ENCODE measurements at regions of chr15 and their contacts with region 1.

Region 1: GRCh38 chr15:63497642-63498467 is 6.5 kb upstream of the USP3 start:
- DNase-seq: no peak
- ATAC-seq: peak; percentile 73
- H3K4me3 ChIP-seq: peak overlapping the region; percentile 4; the same call in 1 of the 2 replicates
- H3K27ac ChIP-seq: peak overlapping the region; percentile 80
- H3K4me1 ChIP-seq: peaks cover 69% of the 10 kb centered on the region
- H3K27me3 ChIP-seq: no peaks in the 10 kb centered on the region
- CTCF ChIP-seq: no peak
- EP300 ChIP-seq: no peak
- POLR2A ChIP-seq: no peak
- RAD21 ChIP-seq: no peak

Region 2: GRCh38 chr15:63473999-63474809 is 23.7 kb before region 1 on chr15:
- CTCF ChIA-PET with region 1: interaction called, 28 read pairs
- POLR2A ChIA-PET with region 1: interaction called, 110 read pairs
- RAD21 ChIA-PET with region 1: interaction called, 197 read pairs
- SMC1A ChIA-PET with region 1: interaction called, 151 read pairs
- in situ Hi-C with region 1: no loop called
- intact Hi-C with region 1: loop called (anchors 1 kb)
- DNase-seq: peak; percentile 97
- ATAC-seq: peak; percentile 80
- H3K4me3 ChIP-seq: peak overlapping the region; percentile 59
- H3K27ac ChIP-seq: peak overlapping the region; percentile 100
- H3K4me1 ChIP-seq: peaks cover 62% of the 10 kb centered on the region
- H3K27me3 ChIP-seq: no peaks in the 10 kb centered on the region
- CTCF ChIP-seq: no peak
- EP300 ChIP-seq: peak; percentile 52 to 74; a peak in 2 of 4 replicates
- POLR2A ChIP-seq: no peak; the same call in 1 of the 2 replicates
- RAD21 ChIP-seq: peak; percentile 40; the same call in 1 of the 2 replicates

Region 3: DNA sequence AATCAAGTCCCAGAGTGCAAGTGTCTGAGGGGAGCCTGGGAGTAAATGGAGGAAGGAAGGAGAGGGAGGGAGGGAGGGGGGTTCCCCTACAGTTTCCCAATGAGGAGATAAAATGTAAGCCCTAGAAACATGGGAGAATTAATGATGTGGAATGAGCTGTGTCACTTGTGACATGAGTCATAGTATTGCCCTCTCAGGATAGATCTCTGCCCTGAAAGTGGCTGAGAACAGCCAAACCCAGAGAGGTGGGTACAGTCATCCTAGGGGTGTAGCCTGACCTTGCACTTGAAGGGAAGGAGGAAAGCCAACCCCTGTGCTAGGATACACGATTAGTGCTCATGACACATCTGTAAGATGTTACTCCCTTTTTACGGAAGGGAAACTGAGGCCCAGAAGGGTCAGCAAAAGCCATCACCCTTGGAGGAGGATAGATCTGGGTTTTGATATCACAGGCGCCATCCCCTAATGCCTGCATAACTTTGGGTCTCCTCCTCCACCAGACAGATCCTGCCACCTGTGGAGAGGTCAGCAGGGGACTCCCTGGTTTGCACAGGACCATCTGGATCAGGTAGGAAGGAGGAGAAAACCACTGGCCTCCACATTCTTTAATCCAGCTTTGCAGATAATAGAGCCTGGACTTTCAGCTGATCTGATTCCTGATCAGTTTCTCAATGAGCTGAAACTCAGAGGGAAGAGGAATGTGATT is 16.6 kb before region 1 on chr15:
- CTCF ChIA-PET with region 1: interaction called, 47 read pairs
- POLR2A ChIA-PET with region 1: interaction called, 110 read pairs
- RAD21 ChIA-PET with region 1: interaction called, 197 read pairs
- SMC1A ChIA-PET with region 1: interaction called, 151 read pairs
- in situ Hi-C with region 1: no loop called
- intact Hi-C with region 1: no loop called
- DNase-seq: peak; percentile 83
- ATAC-seq: peak; percentile 60
- H3K4me3 ChIP-seq: no peak overlapping the region
- H3K27ac ChIP-seq: peak overlapping the region; percentile 77
- H3K4me1 ChIP-seq: peaks cover 88% of the 10 kb centered on the region
- H3K27me3 ChIP-seq: no peaks in the 10 kb centered on the region
- CTCF ChIP-seq: 0 out of 6 replicates have a peak, but pooled peaks of 1 of the 3 experiments have one; percentile 4
- EP300 ChIP-seq: 0 out of 4 replicates have a peak, but pooled peaks of 1 of the 2 experiments have one; percentile 23
- POLR2A ChIP-seq: no peak
- RAD21 ChIP-seq: no peak

Region 4: DNA sequence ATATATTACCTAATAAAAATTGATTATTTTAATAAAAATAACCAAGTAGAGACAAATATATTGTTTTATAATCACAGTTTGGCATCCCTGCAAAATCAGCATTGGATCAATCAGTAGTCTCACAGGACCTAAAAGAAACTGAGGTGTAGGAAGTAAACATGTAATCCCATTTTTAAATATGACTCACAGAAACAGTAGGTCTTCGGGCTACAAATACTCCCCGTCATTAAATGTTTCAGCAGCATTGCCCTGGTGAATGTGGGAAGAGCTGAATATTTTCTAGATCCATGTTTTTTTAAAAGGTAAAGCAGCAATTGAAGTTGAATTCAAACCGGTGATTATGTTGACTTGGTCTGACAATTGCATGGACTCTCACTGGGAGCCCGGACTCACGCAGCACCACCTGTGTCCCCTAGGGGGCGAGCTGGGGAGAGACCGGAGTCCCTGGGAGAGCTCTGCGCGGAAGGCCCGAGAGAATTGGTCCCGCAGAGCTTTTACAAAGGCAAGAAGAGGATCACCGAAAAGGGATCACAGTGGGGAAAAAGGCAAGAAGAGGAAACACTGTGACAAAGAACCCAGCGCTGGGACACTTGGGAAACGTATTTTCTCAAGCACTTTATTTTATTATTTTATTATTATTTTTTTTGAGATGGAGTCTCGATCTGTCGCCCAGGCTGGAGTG is 10.6 kb before region 1 on chr15:
- CTCF ChIA-PET with region 1: interaction called, 81 read pairs
- POLR2A ChIA-PET with region 1: interaction called, 110 read pairs
- RAD21 ChIA-PET with region 1: interaction called, 144 read pairs
- SMC1A ChIA-PET with region 1: interaction called, 151 read pairs
- in situ Hi-C with region 1: no loop called
- intact Hi-C with region 1: loop called (anchors 1 kb)
- DNase-seq: no peak
- ATAC-seq: peak; percentile 74
- H3K4me3 ChIP-seq: peak overlapping the region; percentile 42; the same call in 1 of the 2 replicates
- H3K27ac ChIP-seq: peak overlapping the region; percentile 89
- H3K4me1 ChIP-seq: peaks cover 57% of the 10 kb centered on the region
- H3K27me3 ChIP-seq: no peaks in the 10 kb centered on the region
- CTCF ChIP-seq: peak; percentile 84 to 98 (median 97)
- EP300 ChIP-seq: no peak
- POLR2A ChIP-seq: no peak
- RAD21 ChIP-seq: peak; percentile 82

Region 5: GRCh38 chr15:63531586-63531985 is 33.7 kb after region 1 on chr15:
- CTCF ChIA-PET with region 1: interaction called, 3 read pairs
- POLR2A ChIA-PET with region 1: interaction called, 5 read pairs
- RAD21 ChIA-PET with region 1: interaction called, 75 read pairs
- SMC1A ChIA-PET with region 1: interaction called, 133 read pairs
- in situ Hi-C with region 1: no loop called
- intact Hi-C with region 1: no loop called
- DNase-seq: no peak
- ATAC-seq: peak; percentile 10; the same call in 1 of the 3 replicates
- H3K4me3 ChIP-seq: no peak overlapping the region
- H3K27ac ChIP-seq: no peak overlapping the region
- H3K4me1 ChIP-seq: peaks cover 51% of the 10 kb centered on the region
- H3K27me3 ChIP-seq: no peaks in the 10 kb centered on the region
- CTCF ChIP-seq: peak in 2 of 3 experiments; percentile 21 to 39; a peak in 2 of 6 replicates
- EP300 ChIP-seq: no peak
- POLR2A ChIP-seq: no peak
- RAD21 ChIP-seq: no peak

Region 6: GRCh38 chr15:63539521-63539920 is 41.7 kb after region 1 on chr15:
- CTCF ChIA-PET with region 1: no interaction called
- POLR2A ChIA-PET with region 1: interaction called, 5 read pairs
- RAD21 ChIA-PET with region 1: interaction called, 75 read pairs
- SMC1A ChIA-PET with region 1: interaction called, 133 read pairs
- in situ Hi-C with region 1: no loop called
- intact Hi-C with region 1: no loop called
- DNase-seq: no peak
- ATAC-seq: no peak
- H3K4me3 ChIP-seq: no peak overlapping the region
- H3K27ac ChIP-seq: no peak overlapping the region
- H3K4me1 ChIP-seq: peaks cover 35% of the 10 kb centered on the region
- H3K27me3 ChIP-seq: no peaks in the 10 kb centered on the region
- CTCF ChIP-seq: no peak
- EP300 ChIP-seq: no peak
- POLR2A ChIP-seq: no peak
- RAD21 ChIP-seq: no peak